ENCODE measurements at regions of chr17 and their contacts with region 1.

Region 1: GRCh38 chr17:36921095-36921851 is 16.0 kb upstream of the LHX1 start:
- DNase-seq: peak; percentile 98
- ATAC-seq: peak; percentile 88
- H3K4me3 ChIP-seq: peak overlapping the region; percentile 29 to 52
- H3K27ac ChIP-seq: peak overlapping the region; percentile 100
- H3K4me1 ChIP-seq: peaks cover 62 to 74% of the 10 kb centered on the region in 2 experiments
- H3K27me3 ChIP-seq: no peaks in the 10 kb centered on the region
- CTCF ChIP-seq: no peak
- POLR2A ChIP-seq: no peak
- RAD21 ChIP-seq: peak; percentile 49

Region 2: GRCh38 chr17:36849871-36850348 is 71.4 kb before region 1 on chr17:
- CTCF ChIA-PET with region 1: no interaction called
- POLR2A ChIA-PET with region 1: interaction called, 3 read pairs
- RAD21 ChIA-PET with region 1: no interaction called
- intact Hi-C with region 1: loop called (anchors 2 kb)
- DNase-seq: peak; percentile 51
- ATAC-seq: peak; percentile 85
- H3K4me3 ChIP-seq: peak overlapping the region; percentile 10 to 27
- H3K27ac ChIP-seq: peak overlapping the region; percentile 51
- H3K4me1 ChIP-seq: peaks cover 25 to 45% of the 10 kb centered on the region in 2 experiments
- H3K27me3 ChIP-seq: no peaks in the 10 kb centered on the region
- CTCF ChIP-seq: peak in 2 of 3 experiments; percentile 56 to 71; a peak in 5 of 6 replicates
- POLR2A ChIP-seq: no peak
- RAD21 ChIP-seq: peak; percentile 49

Region 3: DNA sequence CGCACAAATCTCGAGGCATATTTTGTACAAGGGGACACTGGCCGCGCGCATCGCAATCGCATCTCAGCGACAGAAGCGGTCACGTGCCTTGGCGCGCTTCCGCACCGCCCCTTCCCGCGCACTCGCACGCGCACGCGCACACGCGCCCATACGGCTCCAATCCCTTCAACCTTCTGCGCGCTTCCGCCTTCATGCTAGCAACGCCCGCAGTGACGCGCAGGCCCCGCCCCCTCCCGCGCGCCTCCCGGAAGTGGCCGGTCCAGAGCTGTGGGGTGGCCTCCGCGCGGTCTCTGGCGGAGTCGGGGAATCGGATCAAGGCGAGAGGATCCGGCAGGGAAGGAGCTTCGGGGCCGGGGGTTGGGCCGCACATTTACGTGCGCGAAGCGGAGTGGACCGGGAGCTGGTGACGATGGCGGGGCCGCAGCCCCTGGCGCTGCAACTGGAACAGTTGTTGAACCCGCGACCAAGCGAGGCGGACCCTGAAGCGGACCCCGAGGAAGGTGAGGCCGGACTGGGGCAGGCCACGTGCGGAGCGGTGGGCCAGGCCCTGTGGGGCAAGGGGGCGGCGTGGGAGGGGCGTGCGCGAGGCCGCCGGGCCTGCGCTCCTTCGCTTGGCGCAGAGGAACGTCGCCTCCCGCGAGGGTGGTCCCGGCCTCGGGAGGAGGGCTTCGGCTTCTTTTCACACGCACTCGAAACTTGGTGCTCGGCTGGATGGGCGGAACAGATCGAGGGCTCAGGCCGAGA is 27.6 kb after region 1 on chr17 and contains the start of gene AATF:
- CTCF ChIA-PET with region 1: no interaction called
- POLR2A ChIA-PET with region 1: interaction called, 5 read pairs
- RAD21 ChIA-PET with region 1: no interaction called
- intact Hi-C with region 1: loop called (anchors 2 kb)
- DNase-seq: peak; percentile 89
- ATAC-seq: peak; percentile 99
- H3K4me3 ChIP-seq: peak within 1 kb of the TSS; percentile 81
- H3K27ac ChIP-seq: peak within 1 kb of the TSS; percentile 91
- H3K4me1 ChIP-seq: peaks cover 3 to 22% of the 10 kb centered on the region in 2 experiments; a peak in 3 of 4 replicates
- H3K27me3 ChIP-seq: no peaks in the 10 kb centered on the region
- CTCF ChIP-seq: no peak
- POLR2A ChIP-seq: peak; percentile 73
- RAD21 ChIP-seq: 0 out of 2 replicates have a peak, but pooled peaks have one; percentile 15
- total RNA-seq, gene AATF: 105 TPM

Region 4: GRCh38 chr17:37025847-37026530 is 104.7 kb after region 1 on chr17:
- CTCF ChIA-PET with region 1: no interaction called
- POLR2A ChIA-PET with region 1: no interaction called
- RAD21 ChIA-PET with region 1: no interaction called
- intact Hi-C with region 1: no loop called
- DNase-seq: no peak
- ATAC-seq: no peak
- H3K4me3 ChIP-seq: no peak overlapping the region
- H3K27ac ChIP-seq: no peak overlapping the region
- H3K4me1 ChIP-seq: no peaks in the 10 kb centered on the region
- H3K27me3 ChIP-seq: no peaks in the 10 kb centered on the region
- CTCF ChIP-seq: no peak
- POLR2A ChIP-seq: no peak
- RAD21 ChIP-seq: no peak

Measured in HCT116 (cell line).